CD8-positive, alpha-beta T cell (primary cell): ENCODE measurements at regions of chr6 and their contacts with region 1.

Region 1: DNA sequence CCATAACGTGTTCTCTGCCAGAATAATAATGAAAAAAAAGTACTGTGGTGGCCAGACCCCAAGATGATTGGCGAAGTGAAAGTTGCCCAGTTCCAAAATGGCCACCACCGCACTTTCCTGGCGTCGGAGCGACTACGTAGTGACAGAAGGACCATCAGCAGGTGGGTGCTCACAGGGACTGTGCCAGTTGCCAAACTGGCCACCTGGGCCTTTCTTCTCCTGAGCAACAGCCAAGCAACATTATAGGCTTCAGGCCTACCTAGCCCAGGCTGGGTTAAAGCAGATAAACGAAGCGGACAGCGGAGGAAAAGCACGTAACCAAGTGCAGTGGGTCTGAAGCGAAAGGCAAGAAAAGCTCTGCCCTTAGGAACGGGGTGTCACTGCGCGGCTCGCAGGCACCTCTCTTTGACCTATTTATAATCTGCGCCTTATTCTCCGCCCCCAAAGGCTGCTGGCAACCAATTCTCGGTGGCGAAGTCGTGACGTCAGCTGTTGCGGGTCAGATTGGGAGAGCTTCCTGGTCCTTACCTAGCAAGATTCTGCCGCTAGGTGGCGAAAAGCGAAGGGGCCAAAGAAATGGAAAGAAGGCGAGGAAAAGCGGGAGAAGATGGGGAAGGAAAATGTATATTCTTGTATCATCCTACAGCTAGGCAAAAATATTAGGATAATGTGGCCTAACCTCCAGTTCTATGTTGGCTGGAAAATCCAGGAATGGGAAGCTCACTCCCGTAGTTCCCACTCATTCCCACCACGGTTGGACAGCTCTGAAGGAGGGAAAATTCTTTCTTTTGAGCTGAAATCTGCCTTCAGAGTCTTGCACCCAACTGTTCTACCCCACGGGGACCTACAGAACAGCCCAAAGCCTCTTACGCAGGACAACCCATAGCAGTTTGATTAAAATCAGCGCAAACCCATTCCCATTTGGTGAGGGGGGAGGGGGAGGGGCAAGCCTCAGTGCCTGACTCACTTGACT is 6.9 kb upstream of the MOG start:
- DNase-seq: peak; percentile 93 to 99 (median 99)
- ATAC-seq: peak; percentile 94
- H3K4me3 ChIP-seq: peak overlapping the region; percentile 67 to 68
- H3K4me3 Mint-ChIP-seq: peak overlapping the region; percentile 97
- H3K27ac ChIP-seq: peak overlapping the region; percentile 93 to 95
- H3K27ac Mint-ChIP-seq: peak overlapping the region; percentile 100
- H3K4me1 ChIP-seq: peaks cover 12% of the 10 kb centered on the region
- H3K4me1 Mint-ChIP-seq: peaks cover 13% of the 10 kb centered on the region
- H3K27me3 ChIP-seq: no peaks in the 10 kb centered on the region
- H3K27me3 Mint-ChIP-seq: peaks cover under 1% of the 10 kb centered on the region
- CTCF ChIP-seq: peak; percentile 98

Region 2: GRCh38 chr6:29627755-29628418 is 22.1 kb before region 1 on chr6:
- CTCF ChIA-PET with region 1: interaction called, 39 read pairs
- POLR2A ChIA-PET with region 1: interaction called, 17 read pairs
- intact Hi-C with region 1: loop called (anchors 1 to 2 kb)
- DNase-seq: peak in 7 of 9 experiments; percentile 24 to 75 (median 62)
- ATAC-seq: peak; percentile 15
- H3K4me3 ChIP-seq: peak overlapping the region; percentile 47 to 81
- H3K4me3 Mint-ChIP-seq: peak overlapping the region; percentile 91
- H3K27ac ChIP-seq: peak overlapping the region in 1 of 2 experiments; percentile 53
- H3K27ac Mint-ChIP-seq: peak overlapping the region; percentile 12
- H3K4me1 ChIP-seq: peaks cover 21% of the 10 kb centered on the region
- H3K4me1 Mint-ChIP-seq: peaks cover 28% of the 10 kb centered on the region
- H3K27me3 ChIP-seq: peaks cover 0 to 5% of the 10 kb centered on the region in 2 experiments
- H3K27me3 Mint-ChIP-seq: peaks cover 3% of the 10 kb centered on the region
- CTCF ChIP-seq: no peak

Region 3: DNA sequence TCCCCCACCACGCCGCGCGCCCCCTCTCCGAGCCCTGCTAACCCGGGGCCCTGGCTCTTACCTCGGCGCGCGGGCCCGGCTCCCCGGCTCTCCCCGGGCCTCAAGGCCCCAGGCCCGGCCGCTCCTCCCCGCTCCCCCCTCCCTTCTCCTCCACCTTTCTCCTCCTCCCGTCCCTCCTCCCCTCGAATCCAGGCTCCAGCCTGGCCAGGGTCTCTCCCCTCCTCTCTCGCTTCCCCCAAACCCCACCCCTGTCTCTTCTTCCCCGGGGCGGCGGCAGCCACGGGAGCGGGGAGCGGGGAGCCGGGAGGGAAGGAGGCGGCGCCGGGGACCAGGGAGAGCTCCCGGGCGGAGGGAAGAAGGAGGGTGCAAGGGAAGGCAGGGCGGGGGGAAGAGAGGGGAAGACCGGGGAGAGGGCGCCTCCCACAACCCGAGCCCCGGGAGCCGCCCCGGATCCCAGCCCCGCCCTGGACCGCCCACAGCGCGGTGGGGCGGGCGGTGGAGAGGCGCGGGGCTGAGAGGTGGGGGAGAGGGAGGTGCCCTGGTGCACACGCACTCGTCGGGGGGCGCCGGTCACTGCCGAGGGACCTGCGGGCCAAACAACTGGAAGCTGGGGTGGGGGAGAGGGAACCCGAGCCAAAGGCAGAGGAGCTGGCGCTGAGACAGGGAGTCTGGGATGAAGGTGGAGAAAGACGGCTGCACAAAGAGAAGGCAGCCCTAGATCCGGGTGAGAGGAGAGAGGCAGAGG is 17.0 kb before region 1 on chr6 and contains the start of gene GABBR1:
- CTCF ChIA-PET with region 1: interaction called, 39 read pairs
- POLR2A ChIA-PET with region 1: interaction called, 17 read pairs
- intact Hi-C with region 1: loop called (anchors 1 to 2 kb)
- DNase-seq: peak in 8 of 9 experiments; percentile 56 to 81 (median 68)
- ATAC-seq: peak; percentile 79
- H3K4me3 ChIP-seq: peak within 1 kb of the TSS; percentile 59 to 71
- H3K4me3 Mint-ChIP-seq: peak within 1 kb of the TSS; percentile 85
- H3K27ac ChIP-seq: peak within 1 kb of the TSS in 1 of 2 experiments; percentile 39
- H3K27ac Mint-ChIP-seq: peak within 1 kb of the TSS; percentile 74
- H3K4me1 ChIP-seq: peaks cover 28% of the 10 kb centered on the region
- H3K4me1 Mint-ChIP-seq: peaks cover 43% of the 10 kb centered on the region
- H3K27me3 ChIP-seq: peaks cover 0 to 5% of the 10 kb centered on the region in 2 experiments
- H3K27me3 Mint-ChIP-seq: peaks cover 4% of the 10 kb centered on the region
- CTCF ChIP-seq: no peak
- total RNA-seq, gene GABBR1: 21.8 to 24.2 TPM

Region 4: GRCh38 chr6:29665942-29666825 is 16.2 kb after region 1 on chr6:
- CTCF ChIA-PET with region 1: interaction called, 101 read pairs
- POLR2A ChIA-PET with region 1: no interaction called
- intact Hi-C with region 1: no loop called
- DNase-seq: no peak
- ATAC-seq: no peak
- H3K4me3 ChIP-seq: no peak overlapping the region
- H3K4me3 Mint-ChIP-seq: no peak overlapping the region
- H3K27ac ChIP-seq: no peak overlapping the region
- H3K27ac Mint-ChIP-seq: no peak overlapping the region
- H3K4me1 ChIP-seq: no peaks in the 10 kb centered on the region
- H3K4me1 Mint-ChIP-seq: no peaks in the 10 kb centered on the region
- H3K27me3 ChIP-seq: peaks cover 5 to 8% of the 10 kb centered on the region in 2 experiments
- H3K27me3 Mint-ChIP-seq: peaks cover 30% of the 10 kb centered on the region
- CTCF ChIP-seq: no peak

Region 5: DNA sequence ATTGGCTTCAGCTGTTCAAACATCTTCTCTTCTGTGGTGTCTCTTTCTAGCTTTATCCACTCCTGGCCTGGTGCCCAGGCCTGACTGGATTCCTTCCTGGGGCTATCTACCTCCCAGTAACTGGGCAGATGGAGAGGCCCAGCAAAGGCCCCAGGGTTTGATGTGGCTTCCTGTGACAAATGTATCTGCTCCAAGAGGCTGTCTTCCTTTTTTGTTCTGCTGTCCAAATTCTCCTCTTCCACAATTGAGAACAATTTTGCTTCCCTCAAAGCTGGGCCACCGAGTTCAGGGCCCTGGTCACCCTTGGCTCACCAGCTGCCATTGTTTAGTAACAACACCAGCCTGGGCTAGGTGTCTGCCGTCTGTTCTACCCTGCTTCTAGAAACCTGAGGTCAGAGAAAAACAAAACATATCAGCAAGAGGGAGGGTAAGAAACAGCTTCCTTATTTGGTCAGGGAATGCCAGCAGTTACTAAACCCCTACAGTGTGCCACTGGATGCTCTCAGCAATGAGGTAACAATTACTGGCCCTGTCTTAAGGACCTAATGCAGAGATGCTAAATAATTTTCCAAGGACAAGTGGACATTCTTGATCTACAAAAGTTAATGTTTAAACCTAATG is 27.1 kb after region 1 on chr6:
- CTCF ChIA-PET with region 1: interaction called, 14 read pairs
- POLR2A ChIA-PET with region 1: no interaction called
- intact Hi-C with region 1: no loop called
- DNase-seq: no peak
- ATAC-seq: no peak
- H3K4me3 ChIP-seq: no peak overlapping the region
- H3K4me3 Mint-ChIP-seq: no peak overlapping the region
- H3K27ac ChIP-seq: no peak overlapping the region
- H3K27ac Mint-ChIP-seq: no peak overlapping the region
- H3K4me1 ChIP-seq: no peaks in the 10 kb centered on the region
- H3K4me1 Mint-ChIP-seq: peaks cover 4% of the 10 kb centered on the region
- H3K27me3 ChIP-seq: no peaks in the 10 kb centered on the region
- H3K27me3 Mint-ChIP-seq: peaks cover 11% of the 10 kb centered on the region
- CTCF ChIP-seq: no peak

Region 6: GRCh38 chr6:29892696-29893095 is 242.7 kb after region 1 on chr6:
- CTCF ChIA-PET with region 1: no interaction called
- POLR2A ChIA-PET with region 1: no interaction called
- intact Hi-C with region 1: no loop called
- DNase-seq: no peak
- ATAC-seq: no peak
- H3K4me3 ChIP-seq: no peak overlapping the region
- H3K4me3 Mint-ChIP-seq: no peak overlapping the region
- H3K27ac ChIP-seq: no peak overlapping the region
- H3K27ac Mint-ChIP-seq: no peak overlapping the region
- H3K4me1 ChIP-seq: peaks cover 6% of the 10 kb centered on the region
- H3K4me1 Mint-ChIP-seq: peaks cover 3% of the 10 kb centered on the region
- H3K27me3 ChIP-seq: no peaks in the 10 kb centered on the region
- H3K27me3 Mint-ChIP-seq: no peaks in the 10 kb centered on the region
- CTCF ChIP-seq: no peak